Activated T-helper 1 cell treated with anti-CD3 and anti-CD28 coated beads, Interleukin-12 subunit alpha, Interleukin-12 subunit beta, Interleukin-2, Interleukin-4 antibody, amounts not matched to agents 30 ng/mL and 10 ng/mL and 1 ng/mL, durations not matched to agents 14 hours and 24 hours and 36 hours (primary cell): ENCODE measurements at regions of chr4 and their contacts with region 1.

Region 1: GRCh38 chr4:22410645-22411247 is 105.1 kb downstream of the ADGRA3 start:
- DNase-seq: no peak
- H3K4me3 Mint-ChIP-seq: no peak overlapping the region
- H3K27ac Mint-ChIP-seq: no peak overlapping the region
- H3K4me1 Mint-ChIP-seq: no peaks in the 10 kb centered on the region
- H3K27me3 Mint-ChIP-seq: no peaks in the 10 kb centered on the region

Region 2: DNA sequence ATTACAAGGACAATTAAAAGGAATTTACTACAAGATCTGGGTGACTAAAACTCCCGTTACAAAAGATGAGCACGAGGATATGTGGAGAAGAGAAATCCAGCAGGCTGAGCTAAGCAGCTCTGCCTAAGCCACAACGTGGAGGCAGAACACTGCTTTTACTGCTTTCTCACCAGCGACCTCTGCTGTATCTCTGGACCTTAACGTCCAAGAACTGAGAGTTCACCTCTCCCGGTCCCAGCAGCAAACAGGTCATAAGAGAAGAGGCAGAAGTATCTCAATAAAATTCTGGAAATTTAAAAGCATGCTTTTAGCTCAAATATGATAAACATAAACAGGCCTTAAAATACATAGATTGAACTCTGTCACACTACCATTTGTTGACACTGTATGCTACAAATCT is 24.1 kb after region 1 on chr4:
- intact Hi-C with region 1: loop called (anchors 1 kb)
- DNase-seq: no peak
- H3K4me3 Mint-ChIP-seq: no peak overlapping the region
- H3K27ac Mint-ChIP-seq: no peak overlapping the region
- H3K4me1 Mint-ChIP-seq: no peaks in the 10 kb centered on the region
- H3K27me3 Mint-ChIP-seq: no peaks in the 10 kb centered on the region

Region 3: GRCh38 chr4:22463179-22463578 is 52.4 kb after region 1 on chr4:
- intact Hi-C with region 1: loop called (anchors 1 kb)
- DNase-seq: no peak
- H3K4me3 Mint-ChIP-seq: no peak overlapping the region
- H3K27ac Mint-ChIP-seq: no peak overlapping the region
- H3K4me1 Mint-ChIP-seq: peaks cover 7% of the 10 kb centered on the region
- H3K27me3 Mint-ChIP-seq: no peaks in the 10 kb centered on the region

Region 4: DNA sequence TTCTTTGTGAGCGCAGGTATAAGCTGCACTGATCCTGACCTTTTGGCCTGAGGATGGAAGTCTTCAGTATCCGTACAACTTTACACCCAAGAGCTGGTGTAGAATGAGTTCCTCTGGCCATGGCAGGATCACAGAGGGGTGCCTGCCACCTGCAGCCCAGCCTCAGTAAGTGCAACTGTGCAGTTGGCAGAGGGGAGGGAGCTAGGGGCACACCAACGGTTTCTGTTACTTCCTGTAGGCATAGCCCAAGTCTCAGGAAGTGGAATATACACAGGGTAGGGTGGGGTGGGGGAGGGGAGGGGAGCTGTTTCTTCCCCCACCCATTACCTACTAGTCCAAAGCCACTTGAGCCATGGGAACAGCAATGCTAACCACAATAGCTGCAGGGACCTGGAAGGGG is 196.6 kb after region 1 on chr4:
- intact Hi-C with region 1: loop called (anchors 1 kb)
- DNase-seq: peak; percentile 11
- H3K4me3 Mint-ChIP-seq: no peak overlapping the region
- H3K27ac Mint-ChIP-seq: no peak overlapping the region
- H3K4me1 Mint-ChIP-seq: peaks cover 9% of the 10 kb centered on the region
- H3K27me3 Mint-ChIP-seq: no peaks in the 10 kb centered on the region

Region 5: DNA sequence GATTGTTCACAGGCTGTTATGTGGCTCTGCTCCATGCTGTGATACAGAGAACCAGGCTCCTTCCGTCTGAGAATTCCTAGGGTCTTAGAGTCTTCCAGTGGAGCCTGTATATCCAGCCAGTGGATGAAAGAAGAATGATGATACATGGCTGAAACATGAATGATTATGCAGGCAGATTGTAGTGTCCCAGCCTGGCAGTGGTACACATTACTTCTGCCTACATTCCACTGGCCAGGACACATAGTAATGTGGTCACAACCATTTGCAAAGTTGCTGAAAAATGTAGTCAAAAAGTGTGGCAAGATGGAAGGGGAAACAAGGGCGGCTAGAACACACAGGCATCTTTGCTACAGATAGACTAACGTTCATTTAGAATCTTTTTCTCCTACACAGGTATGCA is 277.5 kb after region 1 on chr4:
- intact Hi-C with region 1: loop called (anchors 1 kb)
- DNase-seq: no peak
- H3K4me3 Mint-ChIP-seq: no peak overlapping the region
- H3K27ac Mint-ChIP-seq: no peak overlapping the region
- H3K4me1 Mint-ChIP-seq: no peaks in the 10 kb centered on the region
- H3K27me3 Mint-ChIP-seq: peaks cover 10% of the 10 kb centered on the region